Heart right ventricle (tissue), 16 donors: ENCODE measurements at regions of chr12 and their contacts with region 1.

Region 1: GRCh38 chr12:71354871-71355270 is 84.7 kb upstream of the LGR5 start:
- DNase-seq: no peak
- ATAC-seq: no peak
- H3K4me3 ChIP-seq: no peak overlapping the region
- H3K27ac ChIP-seq: no peak overlapping the region
- H3K4me1 ChIP-seq: no peaks in the 10 kb centered on the region
- H3K27me3 ChIP-seq: no peaks in the 10 kb centered on the region
- CTCF ChIP-seq: no peak

Region 2: GRCh38 chr12:70962226-70962794 is 392.6 kb before region 1 on chr12:
- intact Hi-C with region 1: no loop called
- DNase-seq: no peak
- ATAC-seq: no peak
- H3K4me3 ChIP-seq: no peak overlapping the region
- H3K27ac ChIP-seq: no peak overlapping the region
- H3K4me1 ChIP-seq: no peaks in the 10 kb centered on the region
- H3K27me3 ChIP-seq: no peaks in the 10 kb centered on the region
- CTCF ChIP-seq: no peak

Region 3: DNA sequence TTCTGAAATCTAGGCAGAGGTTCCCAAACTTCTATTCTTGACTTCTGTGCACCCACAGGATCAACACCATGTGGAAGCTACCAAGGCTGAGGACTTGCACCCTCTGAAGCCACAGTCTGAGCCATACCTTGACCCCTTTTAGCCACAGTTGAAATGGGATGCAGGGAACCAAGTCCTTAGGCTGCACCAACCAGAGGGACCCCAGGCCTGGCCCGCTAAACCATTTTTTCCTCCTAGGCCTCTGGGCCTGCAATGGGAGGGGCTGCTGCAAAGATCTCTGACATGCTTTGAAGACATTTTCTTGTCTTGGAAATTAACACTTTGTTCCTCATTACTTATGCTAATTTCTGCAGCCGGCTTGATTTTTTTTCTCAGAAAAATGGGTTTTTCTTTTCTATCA is 63.1 kb before region 1 on chr12:
- intact Hi-C with region 1: loop called in 1 of 10 experiments (anchors 2 kb)
- DNase-seq: no peak
- ATAC-seq: no peak
- H3K4me3 ChIP-seq: no peak overlapping the region
- H3K27ac ChIP-seq: no peak overlapping the region
- H3K4me1 ChIP-seq: no peaks in the 10 kb centered on the region
- H3K27me3 ChIP-seq: no peaks in the 10 kb centered on the region
- CTCF ChIP-seq: no peak

Region 4: DNA sequence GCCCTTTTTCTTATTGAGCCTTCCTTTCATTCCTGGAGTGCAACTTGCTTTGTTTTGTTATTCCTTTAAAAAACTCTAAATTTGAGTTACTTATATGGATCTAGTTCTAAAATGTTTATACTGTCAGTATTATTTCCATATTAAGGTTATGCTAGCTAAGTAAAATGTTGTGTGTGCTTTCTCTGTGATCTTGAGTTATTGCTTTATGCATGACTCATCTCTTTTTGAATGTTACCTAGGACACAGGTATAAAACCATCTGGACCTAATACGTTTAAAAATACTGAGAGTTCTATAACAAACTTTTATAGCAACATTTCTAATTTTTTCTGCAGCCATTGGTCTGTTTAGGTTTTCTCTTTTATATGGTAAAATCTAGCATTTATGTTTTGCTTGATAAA is 48.1 kb before region 1 on chr12:
- intact Hi-C with region 1: loop called in 1 of 10 experiments (anchors 5 kb)
- DNase-seq: no peak
- ATAC-seq: no peak
- H3K4me3 ChIP-seq: no peak overlapping the region
- H3K27ac ChIP-seq: no peak overlapping the region
- H3K4me1 ChIP-seq: no peaks in the 10 kb centered on the region
- H3K27me3 ChIP-seq: no peaks in the 10 kb centered on the region
- CTCF ChIP-seq: no peak